H1 (cell line): ENCODE measurements at regions of chr4 and their contacts with region 1.

Region 1: DNA sequence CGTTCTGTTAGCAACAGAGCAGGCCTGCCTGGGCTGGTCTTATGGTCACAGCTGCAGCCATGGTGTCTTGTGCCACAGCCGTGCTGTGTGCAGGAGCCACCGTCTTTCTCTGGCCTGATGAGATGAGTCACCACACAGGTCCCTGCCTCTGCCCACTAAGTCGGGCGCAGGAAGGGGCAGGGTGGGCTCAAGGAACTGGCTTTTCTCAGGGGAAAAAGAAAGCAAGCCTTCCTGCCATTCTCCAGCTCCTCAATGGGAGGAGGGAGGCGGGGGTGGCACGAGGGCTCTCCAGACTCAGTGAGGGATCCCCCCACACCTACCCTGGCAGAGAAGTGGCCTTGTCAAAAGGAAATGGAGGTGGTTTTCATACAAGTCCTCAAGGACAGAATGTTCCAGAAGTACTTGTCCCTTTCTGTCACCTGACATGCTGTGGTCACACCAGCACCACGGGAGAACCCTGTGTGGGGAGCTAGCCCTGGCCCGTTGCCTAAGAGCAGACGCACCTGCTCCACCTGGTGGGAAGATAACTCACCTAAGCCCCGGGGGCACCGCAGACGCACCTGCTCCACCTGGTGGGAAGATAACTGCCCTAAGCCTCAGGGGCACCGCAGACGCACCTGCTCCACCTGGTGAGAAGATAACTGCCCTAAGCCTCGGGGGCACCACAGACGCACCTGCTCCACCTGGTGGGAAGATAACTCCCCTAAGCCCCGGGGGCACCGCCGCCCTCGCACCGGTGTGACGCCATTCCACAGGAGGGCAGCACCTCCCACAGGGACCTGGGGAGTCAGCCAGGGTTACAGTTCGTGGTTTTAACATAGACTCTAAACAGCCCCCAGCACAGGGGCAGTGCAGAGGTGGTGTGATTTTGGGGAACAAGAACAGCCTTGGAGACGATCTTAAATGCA is 18.5 kb downstream of the UVSSA start:
- DNase-seq: no peak
- H3K4me3 ChIP-seq: no peak overlapping the region
- H3K27ac ChIP-seq: no peak overlapping the region
- H3K4me1 ChIP-seq: peaks cover 0 to 2% (median 0%) of the 10 kb centered on the region in 4 experiments; a peak in 1 of 7 replicates
- H3K27me3 ChIP-seq: no peaks in the 10 kb centered on the region
- CTCF ChIP-seq: peak in 2 of 3 experiments; percentile 46 to 59; a peak in 3 of 4 replicates
- EP300 ChIP-seq: no peak
- POLR2A ChIP-seq: no peak
- RAD21 ChIP-seq: peak; percentile 12 to 32; a peak in 3 of 4 replicates

Region 2: DNA sequence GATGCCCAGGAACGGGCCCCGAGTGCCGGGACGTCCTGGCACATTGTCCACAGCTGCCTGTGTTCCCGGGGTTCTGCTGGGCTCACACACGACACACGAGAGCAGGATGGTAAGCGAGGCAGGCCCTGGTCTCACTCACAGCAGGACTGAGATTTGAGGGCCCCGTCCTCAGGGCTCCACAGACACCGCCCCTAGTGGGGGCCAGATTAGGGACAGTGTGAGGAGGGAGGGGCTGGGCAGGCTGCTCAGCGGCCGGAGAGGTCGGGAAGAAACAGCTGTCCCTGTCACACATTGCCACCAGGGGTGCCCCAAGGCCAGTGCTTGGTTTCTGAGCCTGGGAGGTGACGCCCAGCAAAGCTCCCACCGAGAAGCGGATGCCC is 11.7 kb after region 1 on chr4:
- CTCF ChIA-PET with region 1: interaction called, 14 read pairs
- POLR2A ChIA-PET with region 1: interaction called, 7 read pairs
- DNase-seq: no peak
- H3K4me3 ChIP-seq: no peak overlapping the region
- H3K27ac ChIP-seq: no peak overlapping the region
- H3K4me1 ChIP-seq: no peaks in the 10 kb centered on the region; a peak in 1 of 7 replicates
- H3K27me3 ChIP-seq: no peaks in the 10 kb centered on the region
- CTCF ChIP-seq: peak in 1 of 3 experiments; percentile 31; a peak in 2 of 4 replicates
- EP300 ChIP-seq: no peak
- POLR2A ChIP-seq: no peak
- RAD21 ChIP-seq: peak; percentile 43

Region 3: DNA sequence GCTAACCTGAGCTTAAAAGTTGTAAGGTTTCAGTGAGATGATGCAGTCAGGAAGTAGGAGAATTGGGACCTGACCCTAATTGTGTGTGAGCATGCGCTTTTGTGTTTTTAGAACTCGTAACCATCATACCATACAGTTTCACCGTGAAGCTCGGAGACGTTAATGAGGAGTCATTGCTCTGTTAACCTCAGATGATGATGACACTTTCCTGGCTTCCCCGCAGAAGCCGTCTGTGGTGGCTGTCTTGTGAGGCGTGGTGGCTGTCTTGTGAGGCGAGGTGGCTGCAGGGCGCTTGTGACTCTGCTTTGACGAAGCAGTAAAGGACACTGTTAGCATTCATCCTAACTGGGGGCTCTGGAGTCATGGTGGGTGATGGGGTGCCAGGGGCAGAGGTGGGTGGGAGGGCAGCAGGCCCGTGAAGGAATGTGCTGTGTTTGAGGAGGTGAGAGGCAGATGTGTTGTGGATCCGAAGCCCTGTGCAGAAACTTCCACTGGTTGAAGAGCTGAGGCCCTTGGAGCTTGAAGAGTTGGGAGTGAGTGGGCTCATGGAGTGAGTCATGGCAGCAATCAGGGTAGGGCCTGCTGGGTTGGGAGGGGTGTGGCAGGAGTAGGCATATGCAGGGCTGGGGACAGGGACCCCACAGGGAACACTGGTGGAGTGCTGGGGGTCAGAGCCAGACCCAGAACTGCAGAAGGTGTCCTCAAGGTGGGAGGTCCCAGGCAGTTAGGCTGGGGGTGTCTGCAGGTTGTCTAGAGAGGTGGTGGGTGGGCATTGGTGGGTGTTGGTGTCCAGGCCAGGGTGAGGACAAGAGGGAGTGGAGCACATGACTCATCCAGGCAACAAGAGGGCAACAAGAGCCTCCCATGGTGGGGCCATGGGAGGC is 563.1 kb after region 1 on chr4:
- CTCF ChIA-PET with region 1: no interaction called
- POLR2A ChIA-PET with region 1: no interaction called
- DNase-seq: no peak
- H3K4me3 ChIP-seq: no peak overlapping the region
- H3K27ac ChIP-seq: no peak overlapping the region
- H3K4me1 ChIP-seq: no peaks in the 10 kb centered on the region
- H3K27me3 ChIP-seq: no peaks in the 10 kb centered on the region
- CTCF ChIP-seq: no peak
- EP300 ChIP-seq: no peak
- POLR2A ChIP-seq: no peak
- RAD21 ChIP-seq: no peak

Region 4: DNA sequence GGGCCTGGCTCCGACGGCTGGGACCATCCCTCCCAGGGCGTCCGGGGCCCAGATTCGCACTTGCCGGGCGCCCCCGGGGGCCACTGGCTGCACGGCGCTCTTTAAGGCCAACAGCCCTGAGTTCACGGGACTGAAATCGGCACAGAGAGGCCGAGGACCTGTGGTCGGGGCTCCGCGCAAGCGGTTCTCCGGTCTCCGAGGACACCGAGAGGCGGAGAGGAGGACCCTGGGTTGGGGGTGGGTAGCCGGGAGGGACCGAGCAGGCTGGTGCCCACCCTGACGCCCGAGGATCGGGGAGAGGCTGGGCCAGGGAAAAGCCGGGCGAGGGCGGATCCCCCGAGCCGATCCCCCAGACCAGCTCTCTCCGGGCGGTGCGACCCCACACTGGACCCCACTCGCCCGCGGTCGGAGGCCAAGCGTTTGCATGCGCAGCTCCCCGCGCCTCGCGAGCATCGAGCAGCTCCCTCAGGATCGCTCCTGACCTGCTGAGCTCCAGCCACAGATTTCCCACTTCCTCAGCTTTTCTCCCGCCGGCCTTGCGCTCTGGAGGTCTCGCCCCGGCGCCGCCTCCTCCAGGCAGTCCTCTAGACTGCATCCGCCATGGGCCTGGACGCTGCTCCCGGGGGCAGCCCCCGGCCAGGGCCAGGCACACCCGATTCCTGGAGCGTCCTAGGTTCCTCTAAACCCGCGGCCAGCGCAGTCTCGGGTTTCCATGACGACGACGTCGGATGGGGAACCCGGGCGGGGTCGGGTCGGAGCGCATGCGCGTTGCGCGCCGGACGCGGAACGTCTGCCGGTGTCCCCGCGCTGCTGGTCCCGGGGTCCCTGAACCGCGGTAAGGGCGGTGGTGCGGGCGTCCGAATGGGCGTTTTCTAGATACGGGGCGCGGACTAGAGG is 676.0 kb after region 1 on chr4:
- CTCF ChIA-PET with region 1: no interaction called
- POLR2A ChIA-PET with region 1: no interaction called
- DNase-seq: peak; percentile 70 to 98
- H3K4me3 ChIP-seq: peak overlapping the region; percentile 48 to 72 (median 58)
- H3K27ac ChIP-seq: no peak overlapping the region
- H3K4me1 ChIP-seq: peaks cover 0 to 8% (median 3%) of the 10 kb centered on the region in 4 experiments; a peak in 5 of 7 replicates
- H3K27me3 ChIP-seq: peaks cover 21 to 52% (median 44%) of the 10 kb centered on the region in 4 experiments
- CTCF ChIP-seq: 0 out of 4 replicates have a peak, but pooled peaks of 1 of the 3 experiments have one; percentile 23
- EP300 ChIP-seq: no peak
- POLR2A ChIP-seq: no peak
- RAD21 ChIP-seq: no peak